GM12878 (cell line): ENCODE measurements at regions of chr6 and their contacts with region 1.

Region 1: DNA sequence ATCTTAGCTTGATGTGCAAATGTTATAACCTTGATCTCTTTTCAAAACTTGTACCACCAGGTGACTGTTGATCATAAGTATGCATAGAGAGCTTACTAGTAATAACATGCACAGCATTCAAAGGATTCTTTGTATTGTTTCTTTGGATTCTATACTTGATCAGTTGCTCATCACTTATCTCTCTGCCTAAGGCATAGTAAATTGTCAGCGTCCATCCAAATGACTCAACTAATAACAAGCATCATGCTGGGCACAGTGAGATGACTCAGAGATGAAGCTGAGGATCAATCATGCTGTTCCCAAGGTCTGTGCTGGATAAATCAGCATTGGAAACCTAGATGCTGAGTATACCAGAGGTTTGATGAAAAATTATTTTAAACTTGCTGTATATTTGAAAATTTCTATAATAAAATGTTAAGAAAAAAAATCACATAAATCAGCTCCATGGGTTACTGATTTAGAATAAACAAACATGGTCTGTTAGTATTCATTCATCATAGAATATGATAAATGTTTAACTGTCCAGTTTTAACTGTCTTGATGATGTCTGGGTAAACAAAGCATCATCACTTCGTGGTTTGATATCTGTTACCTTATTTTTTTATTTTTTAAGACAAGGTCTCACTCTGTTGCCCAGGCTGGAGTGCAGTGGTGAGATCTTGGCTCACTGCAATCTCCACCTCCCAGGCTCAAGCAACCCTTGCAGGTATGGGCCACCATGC is 45.6 kb upstream of the SGK1 start:
- DNase-seq: no peak
- ATAC-seq: no peak
- H3K4me3 ChIP-seq: no peak overlapping the region
- H3K27ac ChIP-seq: no peak overlapping the region
- H3K4me1 ChIP-seq: no peaks in the 10 kb centered on the region
- H3K27me3 ChIP-seq: no peaks in the 10 kb centered on the region
- CTCF ChIP-seq: no peak
- EP300 ChIP-seq: no peak
- POLR2A ChIP-seq: no peak
- RAD21 ChIP-seq: no peak

Region 2: DNA sequence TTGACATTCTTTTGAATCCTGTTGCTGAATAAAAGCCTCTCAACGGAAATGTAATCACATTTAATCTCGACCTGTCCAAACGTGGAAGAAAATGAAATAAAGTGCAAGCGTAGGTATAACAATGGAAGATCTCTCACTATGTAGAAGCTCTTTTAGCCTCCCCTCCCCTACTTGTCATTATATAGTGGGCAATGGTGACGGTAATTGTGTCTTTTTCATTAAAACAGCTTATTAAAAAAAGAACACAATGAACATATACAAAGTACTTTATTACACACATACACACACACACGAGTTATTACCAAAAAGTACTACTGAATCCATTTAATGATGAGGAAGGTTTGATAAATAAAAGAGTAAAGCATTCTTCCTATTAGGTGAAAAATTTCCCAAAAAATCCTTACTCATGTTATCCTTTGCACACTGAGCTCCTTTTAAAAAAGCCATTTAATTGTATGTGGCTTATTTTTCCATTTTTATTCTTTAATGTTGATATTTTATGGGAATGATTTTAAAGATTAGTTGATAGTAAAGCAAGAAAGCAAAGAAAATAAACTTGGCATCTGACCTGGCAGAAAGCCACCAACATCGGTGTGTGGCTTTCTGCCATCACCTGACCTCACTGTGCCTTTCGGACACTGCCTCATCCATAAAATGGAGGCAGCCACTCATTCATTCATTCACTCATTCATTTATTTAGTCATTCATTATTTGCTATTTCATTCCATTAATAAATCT is 45.1 kb before region 1 on chr6:
- CTCF ChIA-PET with region 1: no interaction called
- POLR2A ChIA-PET with region 1: no interaction called
- RAD21 ChIA-PET with region 1: no interaction called
- SMC1A ChIA-PET with region 1: no interaction called
- in situ Hi-C with region 1: no loop called
- intact Hi-C with region 1: no loop called
- DNase-seq: no peak
- ATAC-seq: no peak
- H3K4me3 ChIP-seq: no peak overlapping the region
- H3K27ac ChIP-seq: no peak overlapping the region
- H3K4me1 ChIP-seq: no peaks in the 10 kb centered on the region
- H3K27me3 ChIP-seq: peaks cover 4 to 13% of the 10 kb centered on the region in 2 experiments
- CTCF ChIP-seq: no peak
- EP300 ChIP-seq: no peak
- POLR2A ChIP-seq: no peak
- RAD21 ChIP-seq: no peak

Region 3: DNA sequence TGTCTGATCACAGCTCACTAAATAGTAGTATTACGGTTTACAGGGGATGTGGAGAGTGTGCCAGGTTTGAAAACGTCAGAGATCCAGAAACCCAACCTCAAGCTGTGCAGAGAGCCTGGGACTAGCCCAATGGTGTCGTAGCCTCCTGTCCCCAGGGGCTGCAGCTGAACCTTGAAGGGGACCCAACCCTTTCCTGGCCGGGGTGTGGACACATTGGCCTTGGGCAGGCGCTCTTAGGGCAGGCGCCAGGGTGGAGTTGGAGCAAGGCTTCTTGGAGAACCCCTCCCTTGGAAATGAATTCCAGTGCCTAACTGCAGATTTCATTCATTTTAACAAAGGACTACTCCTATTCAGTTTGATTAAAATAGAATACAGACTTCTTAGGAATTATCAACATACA is 21.3 kb before region 1 on chr6:
- CTCF ChIA-PET with region 1: no interaction called
- POLR2A ChIA-PET with region 1: no interaction called
- RAD21 ChIA-PET with region 1: no interaction called
- SMC1A ChIA-PET with region 1: no interaction called
- in situ Hi-C with region 1: no loop called
- intact Hi-C with region 1: no loop called
- DNase-seq: no peak
- ATAC-seq: no peak
- H3K4me3 ChIP-seq: no peak overlapping the region
- H3K27ac ChIP-seq: no peak overlapping the region
- H3K4me1 ChIP-seq: no peaks in the 10 kb centered on the region
- H3K27me3 ChIP-seq: no peaks in the 10 kb centered on the region
- CTCF ChIP-seq: no peak
- EP300 ChIP-seq: no peak
- POLR2A ChIP-seq: no peak
- RAD21 ChIP-seq: no peak

Region 4: DNA sequence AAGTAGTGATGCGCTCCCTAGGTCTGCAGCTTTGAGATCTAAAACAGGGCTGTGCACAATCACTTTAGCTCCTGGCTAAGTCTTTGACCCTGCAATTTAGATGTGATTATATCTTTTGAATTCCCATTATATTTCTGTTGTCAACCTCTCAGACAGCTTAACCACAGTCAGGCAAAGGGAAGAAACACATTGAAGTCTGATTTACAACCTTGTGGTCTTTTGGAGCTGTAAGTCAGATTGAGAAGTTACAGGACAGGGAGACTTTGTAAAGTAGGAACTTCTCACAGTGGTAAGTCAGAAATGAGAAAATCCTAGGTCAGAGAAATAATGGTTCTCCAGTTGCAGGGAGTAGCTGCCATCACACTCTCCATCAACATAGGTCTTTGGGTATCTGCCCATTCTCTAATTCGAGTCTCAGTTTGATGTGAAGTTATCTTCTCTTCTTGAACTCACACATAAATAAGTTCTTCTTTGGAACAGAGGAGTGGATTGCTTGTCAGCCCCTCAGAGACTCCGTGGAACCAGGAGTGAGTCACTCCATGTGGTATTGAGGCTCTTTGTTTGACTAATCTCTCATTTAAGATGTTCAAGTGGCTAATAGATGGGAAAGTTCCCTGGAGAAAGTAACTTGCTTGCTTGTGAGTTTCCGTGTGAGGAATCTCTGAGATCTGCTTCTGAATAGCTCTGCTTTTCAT is 10.5 kb before region 1 on chr6:
- CTCF ChIA-PET with region 1: no interaction called
- POLR2A ChIA-PET with region 1: interaction called, 5 read pairs
- RAD21 ChIA-PET with region 1: interaction called, 4 read pairs
- SMC1A ChIA-PET with region 1: interaction called, 21 read pairs
- in situ Hi-C with region 1: no loop called
- intact Hi-C with region 1: no loop called
- DNase-seq: no peak
- ATAC-seq: no peak
- H3K4me3 ChIP-seq: no peak overlapping the region
- H3K27ac ChIP-seq: no peak overlapping the region
- H3K4me1 ChIP-seq: no peaks in the 10 kb centered on the region
- H3K27me3 ChIP-seq: no peaks in the 10 kb centered on the region
- CTCF ChIP-seq: no peak
- EP300 ChIP-seq: no peak
- POLR2A ChIP-seq: no peak
- RAD21 ChIP-seq: no peak

Region 5: GRCh38 chr6:134405386-134406087 is 42.1 kb after region 1 on chr6:
- CTCF ChIA-PET with region 1: no interaction called
- POLR2A ChIA-PET with region 1: no interaction called
- RAD21 ChIA-PET with region 1: no interaction called
- SMC1A ChIA-PET with region 1: no interaction called
- in situ Hi-C with region 1: no loop called
- intact Hi-C with region 1: no loop called
- DNase-seq: no peak
- ATAC-seq: no peak
- H3K4me3 ChIP-seq: no peak overlapping the region
- H3K27ac ChIP-seq: no peak overlapping the region
- H3K4me1 ChIP-seq: no peaks in the 10 kb centered on the region
- H3K27me3 ChIP-seq: no peaks in the 10 kb centered on the region; a peak in 1 of 4 replicates
- CTCF ChIP-seq: no peak
- EP300 ChIP-seq: no peak
- POLR2A ChIP-seq: no peak
- RAD21 ChIP-seq: no peak

Region 6: DNA sequence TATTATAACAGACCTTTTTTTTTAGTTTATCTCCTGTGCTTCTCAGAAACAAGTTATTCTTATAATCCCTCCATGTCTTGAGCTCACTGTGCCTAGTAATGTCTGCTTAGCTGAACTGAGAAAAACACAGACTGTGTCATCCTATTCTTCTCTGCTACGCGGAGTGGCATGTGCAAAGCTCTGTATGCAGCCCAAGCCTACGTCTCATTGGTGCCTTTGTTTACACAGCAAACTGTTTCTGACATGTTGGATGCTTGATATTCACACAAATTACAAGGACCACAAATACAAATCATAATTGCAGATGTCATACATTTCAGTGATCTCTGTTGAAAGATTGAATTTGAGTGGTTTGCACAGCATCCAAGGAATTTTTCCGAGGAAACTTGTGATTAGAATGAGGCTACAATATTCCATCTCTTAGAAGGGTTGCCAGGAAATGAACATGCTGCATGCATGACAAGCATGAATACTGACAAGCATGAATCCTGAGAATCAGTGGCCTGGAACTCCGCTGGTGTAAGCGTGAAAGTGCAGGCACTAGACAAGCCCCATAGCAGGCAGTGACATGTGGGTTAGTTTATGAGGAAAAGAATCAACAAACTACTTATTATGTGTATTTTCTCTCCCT is 82.9 kb after region 1 on chr6:
- CTCF ChIA-PET with region 1: no interaction called
- POLR2A ChIA-PET with region 1: no interaction called
- RAD21 ChIA-PET with region 1: no interaction called
- SMC1A ChIA-PET with region 1: no interaction called
- in situ Hi-C with region 1: no loop called
- intact Hi-C with region 1: no loop called
- DNase-seq: no peak
- ATAC-seq: no peak
- H3K4me3 ChIP-seq: no peak overlapping the region
- H3K27ac ChIP-seq: no peak overlapping the region
- H3K4me1 ChIP-seq: no peaks in the 10 kb centered on the region
- H3K27me3 ChIP-seq: no peaks in the 10 kb centered on the region; a peak in 1 of 4 replicates
- CTCF ChIP-seq: no peak
- EP300 ChIP-seq: no peak
- POLR2A ChIP-seq: no peak
- RAD21 ChIP-seq: no peak